Mammary epithelial cell (primary cell): ENCODE measurements at regions of chr2 and their contacts with region 1.

Region 1: DNA sequence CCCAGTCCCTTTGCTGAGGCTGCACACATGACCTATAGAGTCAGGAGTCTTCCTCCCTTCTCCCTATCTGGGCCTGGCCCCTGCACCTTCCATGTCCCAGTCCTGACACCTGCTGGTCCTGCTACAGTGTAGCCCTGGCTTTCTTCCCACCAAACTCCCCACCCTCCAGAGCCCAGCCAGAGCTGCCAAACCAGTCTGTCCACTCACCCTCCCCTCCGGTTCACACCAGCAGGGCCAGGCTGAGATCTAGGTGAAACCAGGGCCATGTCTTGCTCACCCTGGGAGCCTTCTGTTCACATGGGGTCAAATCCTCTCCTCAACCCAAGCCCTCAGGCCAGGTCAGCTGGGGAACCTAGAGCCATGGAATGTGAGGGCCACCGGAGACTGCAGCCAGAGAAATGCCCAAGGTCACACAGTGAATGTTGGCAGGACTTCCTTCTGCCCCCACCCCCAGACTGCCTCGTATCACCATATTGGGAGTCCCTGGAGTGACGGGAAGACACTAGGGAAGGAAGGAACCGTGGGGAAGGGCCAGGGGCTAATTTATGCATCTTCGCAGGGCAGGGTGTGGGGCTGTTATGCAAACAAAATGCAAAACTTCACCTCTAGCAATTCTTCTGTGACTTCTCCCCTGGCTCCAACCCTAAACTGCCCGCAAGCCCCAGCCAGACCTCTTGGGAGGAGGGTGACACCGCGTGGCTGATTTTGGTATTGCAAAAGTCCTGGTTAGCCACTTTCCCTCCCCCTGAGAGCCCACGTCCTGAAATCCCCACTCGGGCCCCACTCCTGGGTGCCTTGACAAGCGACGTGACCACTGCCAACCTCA is 14.6 kb downstream of the TNS1 start:
- DNase-seq: peak; percentile 68
- H3K4me3 ChIP-seq: no peak overlapping the region
- H3K27ac ChIP-seq: no peak overlapping the region
- H3K4me1 ChIP-seq: peaks cover 5% of the 10 kb centered on the region
- H3K27me3 ChIP-seq: no peaks in the 10 kb centered on the region
- CTCF ChIP-seq: peak; percentile 71 to 84

Region 2: DNA sequence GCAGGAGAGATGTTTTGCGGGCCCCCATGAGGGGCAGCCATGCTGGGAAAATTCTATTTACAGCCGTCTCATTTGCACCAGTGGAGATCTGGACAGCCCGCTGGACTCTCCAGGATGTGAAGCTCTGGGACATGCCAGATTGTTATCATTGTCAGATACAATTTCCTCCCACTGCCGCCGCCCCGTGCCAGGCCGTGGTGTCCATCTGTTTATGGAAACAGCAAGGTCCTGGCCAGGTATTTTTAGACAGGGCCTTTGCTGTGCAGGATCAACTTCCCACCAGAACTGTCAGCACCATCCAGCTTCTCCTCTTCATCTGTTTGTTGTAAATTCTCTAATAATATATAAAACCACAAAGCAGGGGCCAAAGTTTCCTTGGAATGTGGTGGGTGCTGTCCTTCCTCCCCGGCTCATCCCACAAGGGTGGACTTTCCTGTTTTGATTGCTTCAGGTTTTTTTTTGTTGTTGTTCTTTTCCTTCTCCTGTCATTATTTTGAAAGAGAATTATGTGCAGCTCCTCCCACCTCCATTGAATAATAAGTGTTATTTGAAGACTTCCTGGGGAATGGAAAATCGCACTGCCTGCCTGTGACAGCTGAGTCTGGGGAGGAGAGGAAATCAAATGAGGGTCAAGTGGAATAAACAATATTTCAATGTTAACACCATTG is 383.6 kb before region 1 on chr2:
- CTCF ChIA-PET with region 1: no interaction called
- dilution Hi-C with region 1: loop called (anchors 10 kb)
- in situ Hi-C with region 1: no loop called
- intact Hi-C with region 1: no loop called
- DNase-seq: no peak
- H3K4me3 ChIP-seq: no peak overlapping the region
- H3K27ac ChIP-seq: no peak overlapping the region
- H3K4me1 ChIP-seq: no peaks in the 10 kb centered on the region
- H3K27me3 ChIP-seq: peaks cover 8% of the 10 kb centered on the region
- CTCF ChIP-seq: no peak

Region 3: GRCh38 chr2:217636991-217637944 is 351.0 kb before region 1 on chr2:
- CTCF ChIA-PET with region 1: no interaction called
- dilution Hi-C with region 1: no loop called
- in situ Hi-C with region 1: no loop called
- intact Hi-C with region 1: no loop called
- DNase-seq: no peak
- H3K4me3 ChIP-seq: no peak overlapping the region
- H3K27ac ChIP-seq: no peak overlapping the region
- H3K4me1 ChIP-seq: no peaks in the 10 kb centered on the region
- H3K27me3 ChIP-seq: no peaks in the 10 kb centered on the region
- CTCF ChIP-seq: no peak

Region 4: DNA sequence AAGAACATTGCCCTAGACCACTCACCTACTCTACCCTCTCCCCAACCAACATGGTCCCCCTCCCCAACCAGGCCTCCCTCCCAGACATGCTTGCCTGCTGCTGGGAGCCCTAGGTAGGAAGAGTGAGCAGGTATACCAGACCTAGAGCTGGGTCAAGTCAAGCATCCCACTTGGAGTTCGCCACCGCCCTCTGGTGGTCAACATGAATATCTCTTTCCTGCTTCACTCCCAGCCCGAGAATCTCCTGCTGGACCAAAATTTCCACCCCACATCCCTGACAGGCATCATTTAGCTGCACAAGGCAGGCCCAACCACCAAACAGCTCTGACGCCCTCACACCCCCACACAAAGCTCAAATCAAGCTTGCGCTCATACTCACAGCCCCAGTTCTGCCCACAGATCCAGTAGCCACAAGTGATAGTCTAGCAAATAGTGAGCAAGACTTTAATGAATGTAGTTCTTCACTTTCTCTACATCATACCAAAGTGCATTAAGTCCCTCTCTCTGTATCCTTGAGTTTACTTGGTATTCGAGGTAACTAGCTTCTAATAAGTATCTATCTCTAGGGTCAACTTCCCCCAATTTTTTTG is 101.4 kb before region 1 on chr2:
- CTCF ChIA-PET with region 1: no interaction called
- dilution Hi-C with region 1: loop called (anchors 5 kb)
- in situ Hi-C with region 1: loop called (anchors 10 kb)
- intact Hi-C with region 1: loop called (anchors 1 kb)
- DNase-seq: peak; percentile 52
- H3K4me3 ChIP-seq: no peak overlapping the region
- H3K27ac ChIP-seq: no peak overlapping the region
- H3K4me1 ChIP-seq: no peaks in the 10 kb centered on the region
- H3K27me3 ChIP-seq: no peaks in the 10 kb centered on the region
- CTCF ChIP-seq: peak; percentile 79 to 83

Region 5: DNA sequence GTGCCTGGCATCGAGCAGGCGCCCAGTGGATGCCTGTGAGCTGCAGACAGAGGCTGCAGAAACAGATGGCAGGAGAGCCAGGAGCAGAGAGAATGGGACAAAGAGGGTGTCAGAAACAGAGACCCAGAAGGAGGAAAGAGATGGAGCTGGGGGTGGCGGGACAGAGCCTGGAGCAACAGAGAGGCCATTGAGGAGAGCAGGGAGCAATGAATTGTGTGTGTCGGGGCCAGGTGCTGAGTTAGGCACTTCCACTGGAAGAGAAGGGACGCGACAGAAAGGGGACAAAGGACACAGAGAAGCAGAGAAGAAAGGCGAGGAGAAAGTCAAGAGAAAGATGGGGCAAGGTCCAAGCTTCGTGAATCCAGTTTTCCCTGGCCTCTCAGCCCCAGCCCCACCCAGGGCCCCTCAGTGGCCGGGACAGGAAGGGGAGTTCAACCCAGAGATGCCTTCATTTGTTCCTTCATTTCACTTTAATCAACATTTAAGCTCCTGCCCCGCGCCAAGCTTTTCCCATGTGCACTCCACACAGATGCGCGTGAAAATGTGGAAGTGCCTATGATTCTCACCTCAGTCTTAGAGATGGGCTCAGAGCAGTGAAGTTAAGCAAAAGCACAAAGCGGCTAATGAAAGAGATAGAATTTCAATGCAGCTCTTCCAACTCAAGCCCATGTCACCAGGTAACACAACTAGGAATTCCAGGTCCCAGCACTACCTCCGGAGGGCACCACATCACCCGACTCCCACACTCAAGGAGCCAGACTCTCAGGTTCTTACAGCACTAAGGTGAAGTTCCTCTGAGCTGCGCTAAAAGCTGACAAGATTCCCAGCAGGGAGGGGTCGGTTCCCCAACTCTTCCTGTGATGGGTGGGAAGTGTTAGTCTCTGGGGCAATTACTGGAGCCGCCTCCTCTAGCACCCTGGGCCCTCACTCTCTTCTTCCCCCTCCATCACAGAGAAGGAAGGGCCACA is 40.6 kb before region 1 on chr2:
- CTCF ChIA-PET with region 1: interaction called, 3 read pairs
- dilution Hi-C with region 1: no loop called
- in situ Hi-C with region 1: no loop called
- intact Hi-C with region 1: loop called (anchors 2 kb)
- DNase-seq: no peak
- H3K4me3 ChIP-seq: no peak overlapping the region
- H3K27ac ChIP-seq: no peak overlapping the region
- H3K4me1 ChIP-seq: no peaks in the 10 kb centered on the region
- H3K27me3 ChIP-seq: peaks cover 3% of the 10 kb centered on the region
- CTCF ChIP-seq: peak in 1 of 2 donors; percentile 4

Region 6: DNA sequence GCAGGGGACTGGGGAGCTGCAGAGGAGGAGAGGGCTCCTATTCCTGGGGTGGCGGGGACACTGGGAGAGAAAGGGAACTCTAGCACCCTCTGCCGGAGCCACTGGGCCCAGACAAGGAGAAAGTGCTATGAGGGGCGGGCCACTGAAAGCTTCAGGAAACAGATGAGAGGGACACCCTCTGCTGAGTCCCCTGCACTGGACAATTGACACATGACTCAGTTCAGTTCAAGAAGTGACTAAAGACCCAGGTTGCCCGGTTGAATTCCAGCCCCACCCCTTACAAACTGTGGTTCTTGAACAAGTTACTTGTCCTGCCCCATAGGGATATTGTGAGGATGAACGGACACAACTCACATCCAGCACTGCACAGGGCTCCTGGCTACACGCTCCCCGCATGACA is 85.8 kb after region 1 on chr2:
- CTCF ChIA-PET with region 1: no interaction called
- dilution Hi-C with region 1: loop called (anchors 5 kb)
- in situ Hi-C with region 1: no loop called
- intact Hi-C with region 1: loop called (anchors 2 kb)
- DNase-seq: no peak
- H3K4me3 ChIP-seq: no peak overlapping the region
- H3K27ac ChIP-seq: no peak overlapping the region
- H3K4me1 ChIP-seq: no peaks in the 10 kb centered on the region
- H3K27me3 ChIP-seq: no peaks in the 10 kb centered on the region
- CTCF ChIP-seq: no peak